ENCODE measurements at regions of chr1 and their contacts with region 1.

Region 1: DNA sequence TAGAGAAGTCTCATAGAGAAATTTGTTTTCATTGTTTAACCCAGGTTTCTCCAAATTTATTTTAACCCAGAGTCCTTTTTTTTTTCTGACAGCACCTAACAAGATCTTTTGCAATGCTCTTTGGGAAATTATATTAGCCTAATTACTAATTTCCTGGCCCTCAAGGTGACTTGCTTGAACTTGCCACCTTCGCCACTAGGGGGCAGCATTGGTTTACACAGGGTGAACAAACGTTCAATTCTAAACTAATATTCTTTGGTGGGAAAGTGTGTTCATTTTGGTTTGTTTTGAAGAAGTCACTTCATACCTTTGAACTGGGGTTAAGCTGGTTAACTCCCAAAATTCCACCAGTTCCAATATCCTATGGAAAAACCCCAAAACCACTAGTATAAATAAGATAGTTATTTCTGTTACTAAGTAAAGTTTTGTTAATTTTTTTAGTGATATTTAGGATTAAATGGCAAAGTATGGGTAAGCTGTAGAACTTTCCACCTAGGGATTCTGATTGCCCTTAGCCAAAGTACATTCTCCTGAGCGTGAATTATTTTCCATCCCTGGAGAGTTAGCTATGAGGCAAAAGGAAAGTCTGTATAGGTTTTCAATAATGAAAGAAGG is 13.0 kb downstream of the CCDC190 start:
- DNase-seq: peak; percentile 92
- H3K4me3 Mint-ChIP-seq: no peak overlapping the region
- H3K27ac Mint-ChIP-seq: no peak overlapping the region
- H3K4me1 Mint-ChIP-seq: peaks cover 7% of the 10 kb centered on the region
- H3K27me3 Mint-ChIP-seq: peaks cover 24% of the 10 kb centered on the region
- CTCF ChIP-seq: peak; percentile 96

Region 2: DNA sequence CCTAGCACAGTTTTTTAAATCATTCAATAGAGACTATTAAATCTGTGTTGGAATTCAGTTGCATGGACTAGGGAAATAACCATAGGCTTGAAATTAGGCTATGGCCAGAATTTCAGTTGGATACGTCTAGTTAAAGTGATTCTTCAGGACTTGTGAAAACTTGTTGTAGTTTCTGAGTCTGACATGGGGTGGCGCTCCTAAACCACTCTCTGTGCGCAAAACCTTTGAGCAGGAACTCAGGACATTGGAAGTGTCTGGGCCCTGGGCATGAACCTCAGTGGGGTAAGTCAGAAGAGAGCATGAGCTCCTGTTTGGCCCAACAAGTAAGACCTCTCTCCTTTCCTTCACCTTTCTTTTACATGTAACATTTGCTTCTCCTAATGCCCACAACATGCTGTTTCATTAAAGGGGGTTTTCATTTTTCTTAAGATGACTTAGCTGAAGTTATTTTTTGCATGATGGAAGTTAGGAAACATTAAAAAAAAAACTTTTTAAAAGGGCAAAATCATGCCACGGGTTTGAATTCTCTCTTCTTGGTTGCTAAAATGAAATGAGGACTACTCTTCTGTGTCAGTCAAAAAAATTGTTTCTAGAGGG is 30.2 kb after region 1 on chr1:
- CTCF ChIA-PET with region 1: interaction called, 20 read pairs
- POLR2A ChIA-PET with region 1: no interaction called
- intact Hi-C with region 1: no loop called
- DNase-seq: peak; percentile 87
- H3K4me3 Mint-ChIP-seq: no peak overlapping the region
- H3K27ac Mint-ChIP-seq: no peak overlapping the region
- H3K4me1 Mint-ChIP-seq: no peaks in the 10 kb centered on the region
- H3K27me3 Mint-ChIP-seq: peaks cover 26% of the 10 kb centered on the region
- CTCF ChIP-seq: peak; percentile 95

Region 3: DNA sequence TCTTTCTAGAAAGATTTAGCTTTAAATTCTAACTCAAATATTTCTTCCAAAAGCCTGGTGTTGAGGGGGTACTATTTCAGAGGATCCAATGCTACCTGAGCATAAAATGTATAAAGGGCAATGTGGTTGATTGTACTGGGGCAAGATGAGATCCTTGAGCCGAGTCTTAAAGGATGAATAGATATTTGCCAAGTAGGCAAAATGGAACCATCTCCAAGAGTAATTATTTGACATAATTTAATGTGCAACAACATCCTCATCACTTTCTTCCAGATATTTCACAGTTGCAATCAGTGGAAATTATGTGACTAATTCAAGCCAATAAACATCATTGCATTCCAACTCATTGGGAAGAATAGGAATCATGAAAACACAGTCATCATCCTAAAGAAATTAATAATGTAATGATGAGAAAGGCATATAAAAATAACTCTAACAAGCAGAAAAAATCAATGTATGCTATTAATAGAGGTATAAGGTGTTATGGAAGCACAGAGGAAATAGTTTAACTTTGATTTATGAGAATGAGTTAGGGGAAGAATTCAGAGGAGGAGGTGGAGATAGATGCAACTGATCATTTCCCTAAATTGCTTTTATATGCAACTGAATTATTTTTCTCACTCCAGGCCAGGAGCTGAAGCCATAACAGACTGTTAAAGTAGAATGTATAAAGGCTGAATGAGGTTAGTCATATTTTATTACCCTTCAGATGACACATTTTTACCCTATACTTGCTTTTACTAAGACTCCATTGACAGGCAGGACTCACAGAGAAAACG is 191.2 kb after region 1 on chr1:
- CTCF ChIA-PET with region 1: no interaction called
- POLR2A ChIA-PET with region 1: no interaction called
- intact Hi-C with region 1: no loop called
- DNase-seq: no peak
- H3K4me3 Mint-ChIP-seq: no peak overlapping the region
- H3K27ac Mint-ChIP-seq: no peak overlapping the region
- H3K4me1 Mint-ChIP-seq: peaks cover 16% of the 10 kb centered on the region
- H3K27me3 Mint-ChIP-seq: no peaks in the 10 kb centered on the region
- CTCF ChIP-seq: no peak

Region 4: DNA sequence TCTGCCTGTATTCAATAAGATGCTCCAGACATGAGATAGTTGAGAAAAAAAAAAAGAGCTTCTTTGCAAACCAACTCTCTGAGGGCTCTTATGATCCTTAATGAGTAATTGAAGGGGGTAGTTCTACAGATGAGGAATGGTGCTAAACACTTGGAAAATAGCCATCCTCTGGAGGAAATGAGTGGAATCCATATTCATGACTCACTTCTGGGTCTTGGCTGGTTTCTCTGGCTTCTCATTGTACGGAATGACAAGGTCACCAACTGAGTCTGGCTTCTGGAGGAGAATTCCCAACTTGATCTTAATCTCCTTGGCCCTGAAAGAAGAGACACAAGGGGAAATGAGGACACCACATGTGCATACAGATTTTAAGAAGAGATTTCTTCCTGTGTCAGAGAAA is 320.1 kb after region 1 on chr1:
- CTCF ChIA-PET with region 1: interaction called, 17 read pairs
- POLR2A ChIA-PET with region 1: no interaction called
- intact Hi-C with region 1: no loop called
- DNase-seq: peak; percentile 97
- H3K4me3 Mint-ChIP-seq: no peak overlapping the region
- H3K27ac Mint-ChIP-seq: no peak overlapping the region
- H3K4me1 Mint-ChIP-seq: peaks cover 23% of the 10 kb centered on the region
- H3K27me3 Mint-ChIP-seq: no peaks in the 10 kb centered on the region
- CTCF ChIP-seq: no peak

Region 5: GRCh38 chr1:163315773-163316374 is 467.9 kb after region 1 on chr1:
- CTCF ChIA-PET with region 1: interaction called, 84 read pairs
- POLR2A ChIA-PET with region 1: interaction called, 6 read pairs
- intact Hi-C with region 1: no loop called
- DNase-seq: peak; percentile 68
- H3K4me3 Mint-ChIP-seq: no peak overlapping the region
- H3K27ac Mint-ChIP-seq: no peak overlapping the region
- H3K4me1 Mint-ChIP-seq: peaks cover 4% of the 10 kb centered on the region
- H3K27me3 Mint-ChIP-seq: no peaks in the 10 kb centered on the region
- CTCF ChIP-seq: peak; percentile 61